ENCODE measurements at regions of chr12 and their contacts with region 1.

Region 1: GRCh38 chr12:94101738-94102660 is 46.4 kb upstream of the PLXNC1 start:
- DNase-seq: peak; percentile 66 to 90
- ATAC-seq: peak; percentile 78 to 90
- H3K4me3 ChIP-seq: peak overlapping the region; percentile 61
- H3K27ac ChIP-seq: peak overlapping the region; percentile 77 to 85
- H3K4me1 ChIP-seq: peaks cover 28% of the 10 kb centered on the region; the same call in 2 of the 3 replicates
- CTCF ChIP-seq: peak; percentile 77
- EP300 ChIP-seq: no peak
- POLR2A ChIP-seq: no peak
- RAD21 ChIP-seq: peak; percentile 93

Region 2: DNA sequence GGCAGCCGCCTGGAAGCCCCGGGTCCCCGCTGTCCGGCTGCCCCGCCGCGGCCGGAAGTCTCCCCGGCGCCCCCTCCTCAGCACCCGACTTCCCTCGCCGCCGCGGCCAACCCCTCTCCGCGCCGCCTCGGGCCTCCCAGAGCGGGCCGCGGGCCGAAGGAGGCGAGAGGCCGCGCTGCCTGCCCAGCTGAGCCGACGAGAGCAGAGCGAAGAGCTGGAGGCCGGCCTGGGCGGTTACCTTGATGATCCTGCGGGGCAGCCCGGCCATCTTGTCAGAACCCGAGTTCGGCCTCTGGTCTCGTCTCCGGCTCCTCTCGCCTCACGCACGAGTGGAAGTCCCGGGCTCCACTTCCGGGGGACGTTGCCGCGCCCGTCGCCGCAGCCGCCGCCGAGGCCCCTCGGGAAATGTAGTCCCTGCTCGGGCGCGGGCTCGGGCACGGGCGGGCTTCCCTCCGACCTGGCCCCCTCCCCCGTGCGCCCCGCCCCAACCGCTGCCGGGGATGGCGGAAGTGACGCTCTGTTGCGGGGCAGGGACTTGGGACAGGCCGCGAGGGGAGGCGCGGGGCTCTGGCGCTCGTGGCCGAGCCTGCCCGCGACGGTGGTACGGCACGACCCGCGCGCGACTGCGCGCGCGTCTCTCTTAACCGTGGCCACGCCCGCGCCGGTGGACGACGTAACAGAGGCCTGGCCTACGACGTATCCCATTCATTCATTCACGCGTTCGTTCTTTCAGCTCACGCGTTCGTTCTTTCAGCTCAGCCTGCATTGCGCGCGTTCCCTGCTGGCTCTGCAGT is 660.2 kb before region 1 on chr12 and contains the start of gene UBE2N:
- CTCF ChIA-PET with region 1: interaction called, 16 read pairs
- POLR2A ChIA-PET with region 1: interaction called, 7 read pairs
- DNase-seq: peak; percentile 88 to 97
- ATAC-seq: peak; percentile 93 to 94
- H3K4me3 ChIP-seq: peak within 1 kb of the TSS; percentile 99
- H3K27ac ChIP-seq: peak within 1 kb of the TSS; percentile 94 to 98
- H3K4me1 ChIP-seq: peaks cover 32% of the 10 kb centered on the region
- CTCF ChIP-seq: no peak
- EP300 ChIP-seq: no peak
- POLR2A ChIP-seq: peak; percentile 79
- RAD21 ChIP-seq: no peak
- polyA plus RNA-seq, gene UBE2N: 160 and 187 TPM in 2 replicates

Region 3: GRCh38 chr12:93536766-93537488 is 565.1 kb before region 1 on chr12:
- CTCF ChIA-PET with region 1: interaction called, 28 read pairs
- POLR2A ChIA-PET with region 1: no interaction called
- DNase-seq: no peak
- ATAC-seq: no peak
- H3K4me3 ChIP-seq: no peak overlapping the region
- H3K27ac ChIP-seq: no peak overlapping the region
- H3K4me1 ChIP-seq: no peaks in the 10 kb centered on the region
- CTCF ChIP-seq: no peak
- EP300 ChIP-seq: no peak
- POLR2A ChIP-seq: no peak
- RAD21 ChIP-seq: no peak

Region 4: GRCh38 chr12:93624595-93625294 is 477.3 kb before region 1 on chr12:
- CTCF ChIA-PET with region 1: interaction called, 12 read pairs
- POLR2A ChIA-PET with region 1: no interaction called
- DNase-seq: peak; percentile 91 to 94
- ATAC-seq: peak; percentile 98 to 99
- H3K4me3 ChIP-seq: no peak overlapping the region
- H3K27ac ChIP-seq: peak overlapping the region; percentile 75 to 84
- H3K4me1 ChIP-seq: peaks cover 22% of the 10 kb centered on the region
- CTCF ChIP-seq: no peak
- EP300 ChIP-seq: peak; percentile 79 to 80; a peak in 2 of 5 replicates
- POLR2A ChIP-seq: no peak
- RAD21 ChIP-seq: peak in 1 of 2 experiments; percentile 28; a peak in 2 of 5 replicates

Region 5: DNA sequence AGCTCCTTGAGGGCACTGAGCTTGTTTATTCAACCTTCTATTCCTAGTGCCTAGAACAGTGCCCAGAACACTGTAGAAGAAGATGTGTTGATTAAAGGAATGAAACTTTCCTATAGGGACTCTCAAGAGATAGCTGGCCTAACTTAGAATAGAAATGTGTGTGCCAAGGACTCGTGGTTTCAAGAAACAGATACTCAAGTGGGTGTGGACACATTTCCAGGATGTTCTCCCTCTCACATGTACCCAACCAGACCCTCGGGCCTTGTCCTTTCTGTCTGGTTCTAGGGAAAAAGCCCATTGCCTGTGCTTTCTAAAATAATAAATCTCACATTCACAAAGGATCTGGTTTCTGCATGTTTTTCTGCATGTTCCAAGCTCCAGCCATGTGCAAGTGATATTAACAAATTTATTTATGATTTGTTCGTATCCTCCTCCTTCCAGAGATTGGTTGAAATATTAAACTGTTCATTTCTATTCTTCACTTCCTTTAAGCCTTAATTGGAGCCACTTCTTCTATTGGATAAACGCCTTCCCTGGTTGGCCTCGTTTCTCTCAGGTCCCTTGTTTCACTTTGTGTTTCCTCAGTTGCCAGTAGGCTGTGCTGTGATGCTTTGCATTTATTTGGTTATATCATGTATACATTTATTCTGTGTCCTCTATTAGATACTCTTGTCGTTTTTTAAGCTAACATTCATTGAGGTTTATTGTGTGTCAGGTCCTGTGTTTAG is 335.0 kb before region 1 on chr12:
- CTCF ChIA-PET with region 1: interaction called, 153 read pairs
- POLR2A ChIA-PET with region 1: interaction called, 8 read pairs
- DNase-seq: peak; percentile 53 to 66
- ATAC-seq: peak; percentile 83 to 93
- H3K4me3 ChIP-seq: no peak overlapping the region
- H3K27ac ChIP-seq: peak overlapping the region; percentile 29 to 58; a peak in 4 of 6 replicates
- H3K4me1 ChIP-seq: peaks cover 15% of the 10 kb centered on the region
- CTCF ChIP-seq: peak; percentile 82
- EP300 ChIP-seq: no peak
- POLR2A ChIP-seq: no peak
- RAD21 ChIP-seq: peak; percentile 89 to 95

Region 6: GRCh38 chr12:94033101-94033500 is 68.9 kb before region 1 on chr12:
- CTCF ChIA-PET with region 1: interaction called, 10 read pairs
- POLR2A ChIA-PET with region 1: no interaction called
- DNase-seq: no peak
- ATAC-seq: no peak
- H3K4me3 ChIP-seq: no peak overlapping the region
- H3K27ac ChIP-seq: no peak overlapping the region
- H3K4me1 ChIP-seq: no peaks in the 10 kb centered on the region
- CTCF ChIP-seq: no peak
- EP300 ChIP-seq: no peak
- POLR2A ChIP-seq: no peak
- RAD21 ChIP-seq: no peak

Measured in A549 (cell line).